Motor neuron (in vitro differentiated cells): ENCODE measurements at regions of chr6 and their contacts with region 1.

Region 1: DNA sequence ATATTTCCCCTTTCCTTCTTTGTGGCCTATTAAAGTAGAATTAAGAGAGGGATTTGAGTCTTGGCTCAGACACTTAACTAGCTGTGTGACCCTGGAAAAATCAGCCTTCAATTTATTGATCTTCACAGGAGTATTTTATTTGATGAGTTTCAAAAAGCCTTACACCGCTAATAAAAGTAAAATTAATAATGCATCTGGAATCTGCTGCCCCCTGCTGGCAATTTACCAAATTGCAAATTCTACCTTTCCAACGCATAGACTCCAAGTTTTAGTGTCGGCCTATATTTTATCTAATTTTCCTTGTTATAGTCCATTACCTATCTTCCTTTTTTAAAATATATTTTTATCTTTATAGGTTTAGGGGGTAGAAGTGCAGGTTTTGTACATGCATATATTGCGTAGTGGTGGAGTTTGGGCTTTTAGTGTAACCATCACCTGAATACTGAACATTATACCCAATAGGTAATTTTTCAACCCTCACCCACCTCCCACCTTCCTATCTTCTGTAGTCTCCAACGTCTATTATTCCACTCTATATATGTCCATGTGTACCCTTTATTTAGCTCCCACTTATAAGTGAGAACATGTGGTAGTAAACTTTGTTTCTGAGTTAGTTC is 46.3 kb downstream of the GOPC start:
- ATAC-seq: peak in 1 of 8 experiments; percentile 22
- H3K4me3 ChIP-seq: no peak overlapping the region
- H3K27ac ChIP-seq: no peak overlapping the region
- H3K4me1 ChIP-seq: no peaks in the 10 kb centered on the region

Region 2: DNA sequence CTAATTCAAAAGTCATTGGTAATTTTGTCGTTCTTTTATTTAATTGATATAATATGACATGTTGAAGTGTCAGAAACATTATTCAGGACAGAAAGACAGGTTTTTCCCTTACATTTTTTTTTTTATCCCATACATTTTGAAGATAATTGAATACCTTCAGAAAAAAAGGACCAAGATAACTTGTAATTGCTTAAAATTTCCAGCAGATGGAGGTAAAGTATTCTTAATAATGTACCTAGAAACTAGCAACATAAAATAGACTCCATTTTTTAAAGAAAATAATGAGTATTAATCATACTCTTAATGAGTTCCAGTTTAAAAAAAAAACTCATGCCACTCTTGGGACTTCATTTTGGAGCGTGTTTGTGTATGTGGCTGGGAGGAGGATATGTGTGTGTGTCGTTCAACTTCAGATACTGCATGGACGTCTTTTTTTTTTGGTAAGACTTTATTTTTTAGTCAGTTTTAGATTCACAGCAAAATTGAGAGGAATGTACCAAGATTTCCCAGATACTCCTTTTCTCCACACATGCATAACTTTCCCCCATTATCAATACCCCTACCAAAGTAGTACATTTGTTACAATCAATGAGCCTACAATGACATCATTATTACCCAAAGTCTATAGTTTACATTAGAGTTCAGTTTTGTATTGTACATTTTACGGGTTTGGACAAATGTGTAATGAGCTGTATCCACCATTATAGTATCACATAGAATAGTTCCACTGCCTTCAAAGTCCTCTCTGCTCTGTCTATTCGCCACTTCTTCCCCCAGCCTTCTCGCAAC is 209.7 kb before region 1 on chr6:
- in situ Hi-C with region 1: loop called in 1 of 9 experiments (anchors 25 kb)
- ATAC-seq: no peak
- H3K4me3 ChIP-seq: no peak overlapping the region
- H3K27ac ChIP-seq: no peak overlapping the region
- H3K4me1 ChIP-seq: no peaks in the 10 kb centered on the region

Region 3: DNA sequence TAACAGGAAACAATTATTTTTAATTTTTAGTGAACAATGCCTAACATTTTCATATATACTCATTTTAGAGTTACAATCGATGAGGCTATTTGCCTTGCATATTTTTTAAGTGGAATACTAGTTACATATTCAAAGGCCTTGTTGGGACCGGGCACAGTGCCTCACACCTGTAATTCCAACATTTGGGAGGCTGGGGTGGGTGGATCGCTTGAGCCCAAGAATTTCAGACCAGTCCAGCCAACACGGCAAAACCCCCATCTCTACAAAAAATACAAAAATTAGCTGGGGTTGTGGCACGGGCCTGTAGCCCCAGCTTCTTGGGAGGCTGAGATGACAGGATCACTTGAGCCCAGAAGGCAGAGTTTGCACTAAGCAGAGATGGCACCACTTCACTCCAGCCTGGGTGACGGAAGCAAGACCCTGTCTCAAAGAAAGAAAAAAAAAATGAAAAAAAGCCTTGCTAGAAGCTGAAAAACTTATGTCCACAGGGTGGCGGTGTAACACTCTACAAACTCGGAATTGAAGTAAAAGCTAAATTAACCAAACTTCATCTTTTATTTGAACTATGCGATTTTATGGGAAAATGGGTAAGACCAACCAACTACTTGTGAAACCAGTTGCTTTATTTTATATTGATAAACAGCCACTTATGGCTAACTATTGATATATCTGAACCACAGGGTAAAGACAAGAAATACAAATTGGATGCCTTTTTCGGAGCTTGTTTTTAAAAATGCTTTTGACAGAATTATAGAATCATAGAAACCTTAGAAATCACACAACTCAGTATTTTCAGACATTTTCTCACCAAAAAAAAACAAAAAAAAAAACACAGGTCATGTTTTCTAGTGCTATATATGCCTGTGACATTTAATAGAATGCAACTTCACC is 106.2 kb before region 1 on chr6:
- in situ Hi-C with region 1: loop called in 3 of 9 experiments (anchors 10 to 25 kb)
- ATAC-seq: peak in 3 of 8 experiments; percentile 22 to 43 (median 35)
- H3K4me3 ChIP-seq: no peak overlapping the region
- H3K27ac ChIP-seq: no peak overlapping the region
- H3K4me1 ChIP-seq: peaks cover 0 to 5% of the 10 kb centered on the region in 2 donors

Region 4: GRCh38 chr6:117776441-117776840 is 220.5 kb after region 1 on chr6:
- in situ Hi-C with region 1: no loop called
- ATAC-seq: peak in 3 of 8 experiments; percentile 70 to 91 (median 72)
- H3K4me3 ChIP-seq: no peak overlapping the region
- H3K27ac ChIP-seq: no peak overlapping the region
- H3K4me1 ChIP-seq: peaks cover 0 to 3% of the 10 kb centered on the region in 2 donors